Panc1 (cell line): ENCODE measurements at regions of chr3 and their contacts with region 1.

Region 1: DNA sequence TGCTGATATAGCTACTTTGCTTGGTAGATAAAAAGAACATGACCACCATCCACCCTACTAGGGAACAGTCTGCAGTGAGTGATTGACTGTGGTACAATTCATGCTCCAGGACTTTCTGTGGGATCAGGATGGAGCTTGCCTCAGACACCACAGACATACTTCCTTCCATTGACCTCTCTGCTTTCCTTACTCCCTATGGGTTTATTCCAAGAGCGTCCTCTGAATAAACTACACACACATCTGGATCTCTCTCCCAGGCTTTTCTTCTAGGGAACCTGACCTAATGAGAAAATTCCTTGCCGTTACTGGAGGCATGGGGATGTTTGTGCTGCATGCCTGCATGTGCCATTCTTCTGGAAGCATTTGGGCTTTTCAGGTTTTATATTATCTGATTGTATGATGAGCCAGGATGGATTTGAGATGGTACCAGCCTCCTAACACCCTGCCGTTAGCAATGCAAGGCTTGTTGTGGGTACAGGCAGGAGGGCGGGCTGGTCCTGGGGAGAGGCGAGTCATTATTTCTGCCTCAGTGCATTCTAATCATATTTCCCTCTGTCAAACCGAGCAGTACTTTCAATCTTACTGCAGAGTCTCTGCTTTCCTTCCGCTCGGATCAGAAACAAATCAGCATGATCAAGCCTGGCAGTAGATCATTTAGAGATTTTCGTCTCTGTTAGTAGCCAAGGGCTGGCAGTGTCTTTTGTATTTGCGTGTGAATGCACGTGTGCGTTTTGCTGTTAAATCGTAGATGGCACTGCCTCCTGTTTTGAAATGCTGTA is 279.2 kb downstream of the PDCD6IP start:
- DNase-seq: no peak
- ATAC-seq: no peak
- H3K4me3 ChIP-seq: no peak overlapping the region
- H3K27ac ChIP-seq: no peak overlapping the region
- H3K4me1 ChIP-seq: no peaks in the 10 kb centered on the region
- H3K27me3 ChIP-seq: no peaks in the 10 kb centered on the region
- CTCF ChIP-seq: no peak

Region 2: GRCh38 chr3:34102288-34102687 is 24.7 kb after region 1 on chr3:
- CTCF ChIA-PET with region 1: no interaction called
- POLR2A ChIA-PET with region 1: no interaction called
- in situ Hi-C with region 1: no loop called
- intact Hi-C with region 1: loop called (anchors 2 kb)
- DNase-seq: no peak
- ATAC-seq: no peak
- H3K4me3 ChIP-seq: no peak overlapping the region
- H3K27ac ChIP-seq: no peak overlapping the region
- H3K4me1 ChIP-seq: no peaks in the 10 kb centered on the region
- H3K27me3 ChIP-seq: no peaks in the 10 kb centered on the region
- CTCF ChIP-seq: no peak

Region 3: DNA sequence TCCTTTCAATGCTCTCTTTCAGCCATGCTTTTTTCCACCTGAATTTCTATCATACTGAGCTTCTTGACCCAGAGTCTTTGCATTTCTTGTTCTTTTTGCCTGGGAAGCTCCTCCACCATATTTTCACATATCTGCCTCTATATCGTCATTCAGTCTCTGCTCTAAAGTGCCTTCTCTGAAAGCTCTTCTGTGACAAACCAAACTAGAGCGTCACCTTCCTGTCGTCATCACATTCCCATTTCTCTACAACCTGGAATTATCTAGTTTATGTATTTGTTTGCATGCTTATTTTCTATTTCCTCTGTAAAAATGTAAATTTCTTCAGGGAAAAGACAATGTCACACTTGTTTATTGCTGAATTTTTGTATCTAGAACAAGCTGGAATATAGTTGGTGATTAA is 438.3 kb after region 1 on chr3:
- CTCF ChIA-PET with region 1: no interaction called
- POLR2A ChIA-PET with region 1: no interaction called
- in situ Hi-C with region 1: no loop called
- intact Hi-C with region 1: loop called (anchors 5 kb)
- DNase-seq: no peak
- ATAC-seq: no peak
- H3K4me3 ChIP-seq: no peak overlapping the region
- H3K27ac ChIP-seq: no peak overlapping the region
- H3K4me1 ChIP-seq: no peaks in the 10 kb centered on the region
- H3K27me3 ChIP-seq: no peaks in the 10 kb centered on the region
- CTCF ChIP-seq: no peak